ENCODE measurements at regions of chr4 and their contacts with region 1.

Region 1: DNA sequence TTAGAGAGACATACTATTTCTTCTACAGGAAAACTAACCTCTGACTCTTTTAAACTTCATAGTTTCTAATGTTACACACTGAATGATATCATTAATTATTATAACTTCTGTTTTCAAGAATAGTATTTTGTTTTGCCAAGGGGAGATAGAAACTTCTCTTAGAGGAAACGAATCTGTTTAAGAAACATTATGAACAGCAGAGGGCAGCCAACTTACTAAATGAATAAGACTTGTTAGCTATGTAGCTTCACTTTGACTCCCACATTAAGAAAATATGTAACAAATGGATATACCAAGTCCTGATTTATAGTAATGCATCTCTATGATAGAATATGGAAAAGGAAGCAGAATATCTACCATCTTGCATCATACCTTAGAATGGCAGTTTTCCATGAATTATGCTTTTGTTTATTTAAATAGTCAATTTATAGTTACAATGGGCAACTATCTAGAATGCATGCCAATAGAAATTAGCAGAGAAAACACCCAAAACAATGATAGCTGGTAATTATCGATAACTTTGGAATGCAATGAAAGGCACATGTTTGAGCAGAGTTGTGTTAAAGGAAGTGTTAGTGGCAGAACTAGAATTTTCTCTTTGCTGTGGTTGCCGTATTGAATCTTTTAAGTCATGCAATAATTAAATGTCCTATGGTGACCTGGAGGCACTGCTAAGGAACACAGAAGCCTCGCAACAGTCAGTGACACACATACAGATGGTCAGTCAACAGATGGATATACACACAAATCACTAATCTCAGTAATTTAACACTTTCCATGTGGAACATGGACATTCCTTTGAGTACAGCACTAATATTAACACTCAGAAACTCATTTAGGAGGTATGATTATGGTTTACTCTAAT is 105.7 kb upstream of the PDLIM3 start:
- DNase-seq: no peak
- H3K4me3 Mint-ChIP-seq: no peak overlapping the region
- H3K27ac Mint-ChIP-seq: no peak overlapping the region
- H3K4me1 Mint-ChIP-seq: no peaks in the 10 kb centered on the region
- H3K27me3 Mint-ChIP-seq: peaks cover 37% of the 10 kb centered on the region

Region 2: GRCh38 chr4:185524888-185525863 is 115.9 kb before region 1 on chr4:
- CTCF ChIA-PET with region 1: no interaction called
- DNase-seq: no peak
- H3K4me3 Mint-ChIP-seq: no peak overlapping the region
- H3K27ac Mint-ChIP-seq: no peak overlapping the region
- H3K4me1 Mint-ChIP-seq: no peaks in the 10 kb centered on the region
- H3K27me3 Mint-ChIP-seq: peaks cover 14% of the 10 kb centered on the region

Region 3: GRCh38 chr4:185886832-185887524 is 245.9 kb after region 1 on chr4:
- CTCF ChIA-PET with region 1: no interaction called
- DNase-seq: no peak
- H3K4me3 Mint-ChIP-seq: no peak overlapping the region
- H3K27ac Mint-ChIP-seq: no peak overlapping the region
- H3K4me1 Mint-ChIP-seq: no peaks in the 10 kb centered on the region
- H3K27me3 Mint-ChIP-seq: peaks cover 12% of the 10 kb centered on the region

Region 4: GRCh38 chr4:186021461-186022167 is 380.6 kb after region 1 on chr4:
- CTCF ChIA-PET with region 1: interaction called, 12 read pairs
- DNase-seq: no peak
- H3K4me3 Mint-ChIP-seq: no peak overlapping the region
- H3K27ac Mint-ChIP-seq: no peak overlapping the region
- H3K4me1 Mint-ChIP-seq: no peaks in the 10 kb centered on the region
- H3K27me3 Mint-ChIP-seq: peaks cover 4% of the 10 kb centered on the region

Region 5: GRCh38 chr4:186037692-186038658 is 396.9 kb after region 1 on chr4:
- CTCF ChIA-PET with region 1: interaction called, 21 read pairs
- DNase-seq: peak; percentile 37
- H3K4me3 Mint-ChIP-seq: no peak overlapping the region
- H3K27ac Mint-ChIP-seq: no peak overlapping the region
- H3K4me1 Mint-ChIP-seq: no peaks in the 10 kb centered on the region
- H3K27me3 Mint-ChIP-seq: peaks cover 18% of the 10 kb centered on the region

Region 6: DNA sequence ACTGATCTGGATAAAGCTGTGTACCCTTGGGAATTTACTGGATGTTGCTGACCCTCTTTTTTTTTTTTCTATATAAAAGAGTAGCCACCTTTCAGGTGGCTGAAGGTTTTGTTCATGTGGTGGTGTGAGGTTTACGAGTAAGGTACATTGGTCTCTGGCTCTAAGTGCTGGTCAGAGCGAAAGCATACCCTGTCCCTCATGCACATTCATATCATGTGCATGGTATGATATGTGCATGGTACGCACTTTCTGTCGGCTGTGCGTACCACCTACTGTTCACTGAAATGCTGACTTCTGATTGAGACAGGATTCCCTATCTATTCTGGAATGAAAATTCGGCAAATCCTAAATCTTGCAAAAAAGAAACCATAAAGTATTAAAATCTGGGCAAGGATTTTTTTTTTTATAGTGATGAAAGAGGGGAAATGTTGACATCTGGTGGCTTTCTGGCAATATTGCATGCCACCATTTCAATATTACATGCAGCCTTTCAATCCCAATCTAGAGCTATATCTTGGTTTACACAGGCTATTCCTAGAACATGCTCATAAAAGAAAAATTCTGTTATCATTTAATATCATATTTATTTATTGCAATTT is 496.3 kb after region 1 on chr4:
- CTCF ChIA-PET with region 1: interaction called, 11 read pairs
- DNase-seq: no peak
- H3K4me3 Mint-ChIP-seq: no peak overlapping the region
- H3K27ac Mint-ChIP-seq: no peak overlapping the region
- H3K4me1 Mint-ChIP-seq: peaks cover 11% of the 10 kb centered on the region
- H3K27me3 Mint-ChIP-seq: peaks cover 10% of the 10 kb centered on the region